Left ventricle myocardium inferior (tissue), 1 donor: ENCODE measurements at regions of chr3 and their contacts with region 1.

Region 1: GRCh38 chr3:149512209-149512782 is 37.8 kb downstream of the TM4SF4 start:
- DNase-seq: peak; percentile 45
- H3K4me3 ChIP-seq: no peak overlapping the region
- H3K27ac ChIP-seq: no peak overlapping the region
- H3K4me1 ChIP-seq: peaks cover 17% of the 10 kb centered on the region
- H3K27me3 ChIP-seq: no peaks in the 10 kb centered on the region
- CTCF ChIP-seq: peak; percentile 94

Region 2: DNA sequence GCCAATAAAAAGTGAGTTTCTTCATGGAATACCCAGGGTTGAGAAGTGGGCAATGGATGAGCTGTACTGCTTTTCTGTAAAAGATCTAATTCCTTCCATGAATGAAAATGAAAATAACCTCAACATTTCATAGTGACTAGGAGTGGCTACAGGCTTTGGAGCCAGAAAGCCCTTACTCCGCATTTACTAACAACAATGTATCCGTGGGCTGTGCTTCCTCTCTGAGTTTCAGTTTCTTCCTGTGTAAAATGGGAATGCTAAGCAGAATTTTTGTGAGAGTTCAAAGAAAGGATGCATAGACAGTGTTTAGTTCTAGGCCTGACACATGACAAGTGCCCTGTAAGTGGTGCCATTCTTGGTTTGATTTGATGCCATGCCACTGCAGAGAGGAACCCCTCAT is 87.4 kb before region 1 on chr3:
- intact Hi-C with region 1: no loop called
- DNase-seq: no peak
- H3K4me3 ChIP-seq: no peak overlapping the region
- H3K27ac ChIP-seq: peak overlapping the region; percentile 45
- H3K4me1 ChIP-seq: peaks cover 8% of the 10 kb centered on the region
- H3K27me3 ChIP-seq: no peaks in the 10 kb centered on the region
- CTCF ChIP-seq: no peak

Region 3: DNA sequence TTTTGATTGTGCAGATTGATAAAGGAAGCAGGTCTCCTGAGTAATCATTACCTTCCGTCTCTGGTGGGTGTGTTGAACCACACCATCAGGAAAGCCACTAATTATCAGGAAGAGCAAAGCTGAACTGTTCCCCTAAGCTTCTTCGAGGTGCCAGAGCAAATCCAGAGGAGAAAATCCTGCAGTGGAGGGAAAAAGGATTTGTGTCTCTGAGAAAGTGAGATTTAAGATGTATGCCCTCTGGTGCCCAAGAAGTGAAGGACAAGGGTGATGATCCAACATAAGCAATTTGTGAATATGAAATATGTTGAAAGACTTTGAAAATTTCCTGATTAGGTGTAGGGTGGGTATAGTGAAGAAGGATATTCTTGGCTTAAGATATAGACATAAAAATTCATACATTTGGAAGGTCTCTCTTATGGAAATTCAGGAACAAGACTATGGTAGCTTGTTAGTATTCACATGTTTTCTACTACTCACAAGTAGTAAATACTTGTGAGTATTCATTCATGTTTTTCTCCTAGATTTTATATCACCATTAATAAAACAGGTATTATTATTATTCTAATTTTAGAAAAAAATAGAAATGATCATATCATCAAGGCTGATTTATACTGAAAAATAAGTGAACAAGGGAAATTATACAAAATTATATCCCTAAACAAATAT is 205.2 kb after region 1 on chr3:
- intact Hi-C with region 1: loop called (anchors 5 kb)
- DNase-seq: no peak
- H3K4me3 ChIP-seq: peak overlapping the region; percentile 35
- H3K27ac ChIP-seq: no peak overlapping the region
- H3K4me1 ChIP-seq: peaks cover 3% of the 10 kb centered on the region
- H3K27me3 ChIP-seq: no peaks in the 10 kb centered on the region
- CTCF ChIP-seq: peak; percentile 85

Region 4: GRCh38 chr3:149744151-149744550 is 231.9 kb after region 1 on chr3:
- intact Hi-C with region 1: no loop called
- DNase-seq: no peak
- H3K4me3 ChIP-seq: no peak overlapping the region
- H3K27ac ChIP-seq: no peak overlapping the region
- H3K4me1 ChIP-seq: no peaks in the 10 kb centered on the region
- H3K27me3 ChIP-seq: no peaks in the 10 kb centered on the region
- CTCF ChIP-seq: no peak

Region 5: GRCh38 chr3:149771652-149772271 is 259.5 kb after region 1 on chr3:
- intact Hi-C with region 1: loop called (anchors 5 kb)
- DNase-seq: no peak
- H3K4me3 ChIP-seq: no peak overlapping the region
- H3K27ac ChIP-seq: no peak overlapping the region
- H3K4me1 ChIP-seq: no peaks in the 10 kb centered on the region
- H3K27me3 ChIP-seq: peaks cover 9% of the 10 kb centered on the region
- CTCF ChIP-seq: peak; percentile 85